Activated CD4-positive, alpha-beta T cell treated with anti-CD3 and anti-CD28 coated beads, Interleukin-2, amount 10 ng/mL, durations not matched to agents 7 days and 5 days (primary cell): ENCODE measurements at regions of chr15 and their contacts with region 1.

Region 1: DNA sequence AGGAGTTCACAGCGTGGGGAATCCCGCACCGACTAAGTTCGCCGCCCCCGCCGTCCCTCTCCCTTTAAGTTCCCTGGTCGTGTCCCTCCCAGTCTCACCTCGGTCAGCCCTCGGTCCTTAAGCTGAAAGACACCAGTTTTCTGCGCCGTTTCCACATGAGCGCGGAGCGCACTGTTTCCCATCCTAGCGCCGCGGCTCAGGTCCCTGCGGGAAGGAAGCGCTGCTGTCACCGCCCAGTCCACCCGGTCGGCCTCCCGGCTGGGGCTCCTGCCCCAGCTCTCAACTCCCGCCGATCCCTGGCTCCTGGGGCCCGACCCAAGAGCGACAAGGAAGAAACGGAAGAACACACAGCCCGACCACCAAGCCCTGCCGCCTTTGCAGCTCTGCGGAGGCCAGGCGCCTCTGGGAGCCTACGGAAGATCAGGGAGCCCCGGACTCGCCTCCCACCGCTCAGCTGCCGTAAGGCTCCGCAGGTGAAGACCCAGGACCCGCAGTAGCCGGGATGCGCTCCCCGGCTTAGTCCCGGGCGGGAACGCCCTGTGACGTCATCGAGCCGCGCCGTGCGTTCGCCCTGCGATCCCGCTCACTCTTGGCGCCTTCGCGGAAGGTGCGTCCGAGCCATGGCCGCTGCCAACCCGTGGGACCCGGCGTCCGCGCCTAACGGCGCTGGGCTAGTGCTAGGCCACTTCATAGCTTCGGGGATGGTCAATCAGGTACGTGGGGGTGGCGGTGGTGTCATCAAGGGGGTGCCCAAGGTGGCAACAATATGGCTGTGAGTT is at the starts of genes HAUS2 and LRRC57:
- DNase-seq: peak; percentile 88
- H3K4me3 Mint-ChIP-seq: peak within 1 kb of the TSS; percentile 95
- H3K27ac Mint-ChIP-seq: peak within 1 kb of the TSS; percentile 98
- H3K4me1 Mint-ChIP-seq: peaks cover 60% of the 10 kb centered on the region
- H3K27me3 Mint-ChIP-seq: no peaks in the 10 kb centered on the region
- total RNA-seq, gene HAUS2: 36.7 to 42.9 TPM
- total RNA-seq, gene LRRC57: 19.1 to 20.3 TPM

Region 2: DNA sequence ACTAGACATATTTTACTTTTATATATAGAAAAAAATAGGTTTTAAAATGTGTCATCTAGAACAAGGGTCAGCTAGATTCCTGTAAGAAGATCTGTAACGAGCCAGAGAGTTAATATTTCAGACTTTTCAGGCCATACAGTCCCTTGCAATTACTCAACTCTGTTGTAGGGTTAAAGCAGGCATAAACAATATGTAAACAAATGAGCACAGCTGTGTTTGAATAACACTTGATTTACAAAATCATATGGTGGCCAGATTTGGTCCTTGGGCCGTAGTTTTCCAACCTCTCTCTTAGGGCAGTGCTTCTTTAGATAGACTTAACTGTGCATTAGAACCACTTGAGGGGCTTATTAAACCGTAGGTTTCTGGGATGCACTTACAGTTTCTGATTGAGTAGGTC is 19.5 kb before region 1 on chr15:
- CTCF ChIA-PET with region 1: interaction called, 20 read pairs
- POLR2A ChIA-PET with region 1: interaction called, 3 read pairs
- DNase-seq: no peak
- H3K4me3 Mint-ChIP-seq: no peak overlapping the region
- H3K27ac Mint-ChIP-seq: no peak overlapping the region
- H3K4me1 Mint-ChIP-seq: peaks cover 17% of the 10 kb centered on the region
- H3K27me3 Mint-ChIP-seq: no peaks in the 10 kb centered on the region